ENCODE measurements at regions of chr1 and their contacts with region 1.

Region 1: DNA sequence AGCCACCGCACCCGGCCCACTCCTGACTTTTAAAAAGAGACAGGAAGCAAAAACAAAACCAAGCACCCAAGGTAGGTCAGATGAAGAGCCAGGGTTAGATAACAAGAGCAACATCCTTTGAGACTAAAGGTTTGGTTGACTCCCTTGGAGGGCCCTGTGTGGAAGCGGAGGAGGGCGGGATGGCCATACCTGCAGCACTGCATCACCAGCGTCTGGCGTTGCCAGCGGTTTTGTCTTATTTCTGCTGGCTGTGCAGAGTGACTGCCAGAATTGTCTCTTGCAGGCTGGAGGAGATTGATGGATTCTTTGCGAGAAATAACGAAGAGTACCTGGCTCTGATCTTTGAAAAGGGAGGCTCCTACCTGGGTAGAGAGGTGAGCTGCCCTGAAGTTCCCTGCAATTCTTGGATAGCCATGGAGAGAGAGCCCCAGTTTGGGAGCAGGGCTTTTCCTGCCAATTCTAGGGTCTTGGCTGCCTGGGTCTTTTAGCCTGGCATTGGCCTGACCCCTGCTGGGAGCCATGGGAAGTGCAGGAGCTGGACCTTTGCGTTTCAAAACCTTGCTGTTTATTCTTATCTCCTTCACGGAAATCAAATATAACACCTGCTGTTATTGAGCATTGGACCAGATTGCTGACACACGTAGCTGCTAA is 24.0 kb downstream of the QSOX1 start:
- DNase-seq: peak; percentile 77
- ATAC-seq: no peak

Region 2: GRCh38 chr1:179867807-179868330 is 310.8 kb before region 1 on chr1:
- intact Hi-C with region 1: loop called (anchors 10 kb)
- DNase-seq: peak; percentile 52
- ATAC-seq: peak; percentile 61

Region 3: DNA sequence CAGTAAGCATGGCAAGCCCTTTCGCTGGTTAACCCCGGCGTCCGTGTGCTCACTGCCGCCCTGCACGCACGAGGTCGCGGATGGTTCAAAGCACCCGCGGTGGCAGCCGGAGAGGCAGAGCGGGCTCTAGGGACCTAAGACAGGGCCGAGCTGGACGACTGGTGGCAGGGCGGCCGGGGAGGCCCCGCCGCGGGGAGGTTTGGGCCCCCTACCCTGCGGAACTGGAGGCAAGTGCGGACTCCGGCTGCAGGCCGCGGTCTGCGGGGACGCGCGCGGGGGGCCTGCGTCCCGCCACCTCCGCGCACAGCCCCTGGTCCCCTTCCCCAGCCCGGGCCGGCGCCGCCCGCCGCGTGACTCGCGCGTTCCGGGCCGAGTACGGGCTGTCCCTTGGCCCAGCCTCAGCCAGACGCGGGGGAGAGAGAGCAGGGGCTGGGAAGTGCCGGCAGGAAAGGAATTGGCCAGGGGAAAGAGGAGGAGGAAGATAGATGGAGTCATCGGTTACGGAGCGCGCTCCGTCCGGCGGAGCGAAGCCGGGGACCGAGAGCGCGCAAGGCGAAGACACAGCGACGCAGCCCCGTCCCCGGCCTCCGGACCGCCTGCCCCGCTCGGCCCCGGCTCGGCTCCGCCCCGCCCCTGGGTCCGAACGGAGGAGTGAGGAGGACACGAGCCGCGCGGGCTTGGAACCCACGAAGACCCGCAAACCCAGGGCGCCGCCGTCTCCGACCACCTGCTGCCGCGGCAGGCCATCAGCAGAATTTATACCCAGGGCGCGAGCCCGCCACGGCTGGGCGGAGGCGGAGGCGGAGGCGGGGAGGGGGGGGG is 50.7 kb after region 1 on chr1:
- intact Hi-C with region 1: no loop called
- DNase-seq: peak; percentile 52
- ATAC-seq: peak; percentile 61